Psoas muscle (tissue), 8 donors: ENCODE measurements at regions of chr10 and their contacts with region 1.

Region 1: DNA sequence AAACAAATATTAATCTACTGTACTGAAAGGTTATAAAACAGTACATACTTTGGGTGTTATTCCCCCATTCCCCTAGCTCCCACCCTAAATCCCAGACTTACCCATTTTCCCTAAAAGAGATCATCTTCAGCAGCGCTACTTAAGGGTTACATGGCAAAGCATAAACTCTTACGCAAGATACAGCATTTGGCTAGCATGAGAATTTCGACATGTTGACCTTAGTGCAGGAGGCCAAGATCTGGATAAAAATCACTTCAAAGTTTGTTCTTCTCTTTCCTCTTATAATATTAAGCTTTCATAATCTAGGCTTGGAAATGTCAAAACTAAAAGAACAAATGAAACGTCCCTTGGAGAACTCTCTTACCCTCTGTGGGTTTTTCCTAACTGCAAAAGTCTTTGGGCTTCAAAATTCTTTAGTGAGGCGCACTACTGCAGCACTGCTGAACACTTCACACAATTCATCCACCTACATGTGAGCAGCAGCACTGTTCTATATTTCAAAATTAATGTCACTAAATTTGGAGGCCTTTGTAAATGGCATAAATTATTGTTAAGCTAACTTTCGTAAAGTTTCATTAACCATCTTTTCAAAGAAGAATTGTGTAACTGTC is 59.5 kb upstream of the PDLIM1 start:
- DNase-seq: no peak
- ATAC-seq: peak; percentile 66 to 79 (median 71)
- H3K4me3 ChIP-seq: no peak overlapping the region
- H3K27ac ChIP-seq: peak overlapping the region; percentile 62
- H3K4me1 ChIP-seq: peaks cover 30% of the 10 kb centered on the region
- H3K27me3 ChIP-seq: no peaks in the 10 kb centered on the region
- CTCF ChIP-seq: no peak

Region 2: GRCh38 chr10:95289003-95289920 is 61.1 kb before region 1 on chr10:
- intact Hi-C with region 1: loop called in 1 of 2 experiments (anchors 5 kb)
- DNase-seq: peak in 1 of 2 donors; percentile 57
- ATAC-seq: peak; percentile 65 to 75 (median 72)
- H3K4me3 ChIP-seq: peak overlapping the region; percentile 95
- H3K27ac ChIP-seq: peak overlapping the region; percentile 85
- H3K4me1 ChIP-seq: peaks cover 29% of the 10 kb centered on the region
- H3K27me3 ChIP-seq: peaks cover 0 to 9% (median 0%) of the 10 kb centered on the region in 3 donors
- CTCF ChIP-seq: no peak